ENCODE measurements at regions of chr10 and their contacts with region 1.

Region 1: DNA sequence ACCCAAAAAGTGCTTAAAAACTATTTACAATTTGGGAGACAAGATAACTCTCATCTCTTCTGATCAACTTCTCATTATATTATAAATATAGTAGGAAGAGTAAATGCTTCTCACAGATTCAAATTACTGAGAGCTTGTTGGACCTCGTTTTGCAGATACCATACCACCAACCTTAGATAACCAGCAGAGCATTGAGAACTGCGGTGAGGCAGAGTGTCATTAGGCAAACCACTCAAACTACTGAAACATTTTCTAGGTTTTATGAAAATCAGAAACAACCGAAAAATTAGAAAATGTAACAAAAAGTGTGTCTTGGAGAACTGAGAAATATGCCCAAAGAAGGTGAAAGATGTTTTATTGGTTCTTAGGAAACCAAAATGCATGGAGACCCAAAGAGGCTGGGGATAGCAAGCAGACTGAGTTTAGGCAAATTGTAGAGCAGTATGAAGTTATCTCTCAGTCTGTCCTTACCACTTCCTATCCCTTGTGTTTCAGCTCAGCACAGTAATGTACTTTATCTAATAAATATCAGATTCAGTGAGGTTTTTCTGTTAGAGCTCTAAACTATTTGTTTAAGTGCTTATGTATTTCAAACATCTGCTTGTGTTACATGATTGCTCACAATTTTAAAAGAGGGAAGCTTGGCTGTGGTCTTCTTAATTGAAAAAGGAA is 77.9 kb downstream of the HECTD2 start:
- DNase-seq: no peak
- H3K4me3 ChIP-seq: no peak overlapping the region
- H3K27ac ChIP-seq: no peak overlapping the region
- H3K4me1 ChIP-seq: no peaks in the 10 kb centered on the region
- H3K27me3 ChIP-seq: no peaks in the 10 kb centered on the region
- CTCF ChIP-seq: no peak
- EP300 ChIP-seq: no peak
- POLR2A ChIP-seq: no peak

Region 2: GRCh38 chr10:91298224-91298871 is 189.7 kb before region 1 on chr10:
- intact Hi-C with region 1: loop called (anchors 10 kb)
- DNase-seq: no peak
- H3K4me3 ChIP-seq: peak overlapping the region; percentile 45 to 55 (median 52)
- H3K27ac ChIP-seq: peak overlapping the region; percentile 36 to 68 (median 50)
- H3K4me1 ChIP-seq: peaks cover 3 to 13% (median 13%) of the 10 kb centered on the region in 4 donors
- H3K27me3 ChIP-seq: peaks cover 0 to 5% (median 0%) of the 10 kb centered on the region in 4 donors
- CTCF ChIP-seq: peak; percentile 87 to 94 (median 91)
- EP300 ChIP-seq: no peak
- POLR2A ChIP-seq: no peak

Region 3: GRCh38 chr10:91908337-91909116 is 420.5 kb after region 1 on chr10:
- intact Hi-C with region 1: loop called (anchors 10 kb)
- DNase-seq: no peak
- H3K4me3 ChIP-seq: peak overlapping the region; percentile 66 to 86 (median 79)
- H3K27ac ChIP-seq: peak overlapping the region; percentile 61 to 76 (median 66)
- H3K4me1 ChIP-seq: peaks cover 0 to 26% (median 23%) of the 10 kb centered on the region in 4 donors
- H3K27me3 ChIP-seq: no peaks in the 10 kb centered on the region
- CTCF ChIP-seq: peak; percentile 11 to 44 (median 28)
- EP300 ChIP-seq: no peak
- POLR2A ChIP-seq: no peak

Measured in esophagus muscularis mucosa (tissue), 4 donors.